ENCODE measurements at regions of chr3 and their contacts with region 1.

Region 1: GRCh38 chr3:129490242-129491045 is 38.0 kb upstream of the RHO start:
- DNase-seq: peak; percentile 70 to 75
- H3K4me3 ChIP-seq: no peak overlapping the region
- H3K27ac ChIP-seq: peak overlapping the region; percentile 79 to 94
- H3K4me1 ChIP-seq: peaks cover 19 to 26% of the 10 kb centered on the region in 2 donors
- H3K27me3 ChIP-seq: no peaks in the 10 kb centered on the region
- CTCF ChIP-seq: peak in 2 of 3 donors; percentile 80 to 88
- POLR2A ChIP-seq: no peak

Region 2: GRCh38 chr3:129469026-129469425 is 21.4 kb before region 1 on chr3:
- intact Hi-C with region 1: no loop called
- DNase-seq: no peak
- H3K4me3 ChIP-seq: no peak overlapping the region
- H3K27ac ChIP-seq: no peak overlapping the region
- H3K4me1 ChIP-seq: no peaks in the 10 kb centered on the region
- H3K27me3 ChIP-seq: no peaks in the 10 kb centered on the region
- CTCF ChIP-seq: no peak
- POLR2A ChIP-seq: no peak

Region 3: GRCh38 chr3:129596194-129597086 is 106.0 kb after region 1 on chr3:
- intact Hi-C with region 1: loop called (anchors 10 kb)
- DNase-seq: peak; percentile 39 to 78
- H3K4me3 ChIP-seq: peak overlapping the region; percentile 18 to 56 (median 19)
- H3K27ac ChIP-seq: peak overlapping the region; percentile 83 to 95
- H3K4me1 ChIP-seq: peaks cover 4 to 34% of the 10 kb centered on the region in 2 donors
- H3K27me3 ChIP-seq: no peaks in the 10 kb centered on the region
- CTCF ChIP-seq: no peak
- POLR2A ChIP-seq: no peak

Measured in breast epithelium (tissue), 4 donors.